Activated CD8-positive, alpha-beta T cell treated with anti-CD3 and anti-CD28 coated beads for 36 hours (primary cell): ENCODE measurements at regions of chr2 and their contacts with region 1.

Region 1: GRCh38 chr2:147800316-147800715 is 44.5 kb upstream of the ACVR2A start:
- DNase-seq: no peak
- ATAC-seq: no peak
- H3K4me3 Mint-ChIP-seq: no peak overlapping the region
- H3K27ac Mint-ChIP-seq: no peak overlapping the region
- H3K4me1 Mint-ChIP-seq: peaks cover 2% of the 10 kb centered on the region
- H3K27me3 Mint-ChIP-seq: peaks cover 2% of the 10 kb centered on the region
- CTCF ChIP-seq: no peak

Region 2: GRCh38 chr2:147663153-147663961 is 137.0 kb before region 1 on chr2:
- CTCF ChIA-PET with region 1: no interaction called
- POLR2A ChIA-PET with region 1: no interaction called
- intact Hi-C with region 1: loop called (anchors 5 kb)
- DNase-seq: peak; percentile 9
- ATAC-seq: peak; percentile 80
- H3K4me3 Mint-ChIP-seq: peak overlapping the region; percentile 28
- H3K27ac Mint-ChIP-seq: peak overlapping the region; percentile 49
- H3K4me1 Mint-ChIP-seq: peaks cover 15% of the 10 kb centered on the region
- H3K27me3 Mint-ChIP-seq: no peaks in the 10 kb centered on the region
- CTCF ChIP-seq: no peak

Region 3: DNA sequence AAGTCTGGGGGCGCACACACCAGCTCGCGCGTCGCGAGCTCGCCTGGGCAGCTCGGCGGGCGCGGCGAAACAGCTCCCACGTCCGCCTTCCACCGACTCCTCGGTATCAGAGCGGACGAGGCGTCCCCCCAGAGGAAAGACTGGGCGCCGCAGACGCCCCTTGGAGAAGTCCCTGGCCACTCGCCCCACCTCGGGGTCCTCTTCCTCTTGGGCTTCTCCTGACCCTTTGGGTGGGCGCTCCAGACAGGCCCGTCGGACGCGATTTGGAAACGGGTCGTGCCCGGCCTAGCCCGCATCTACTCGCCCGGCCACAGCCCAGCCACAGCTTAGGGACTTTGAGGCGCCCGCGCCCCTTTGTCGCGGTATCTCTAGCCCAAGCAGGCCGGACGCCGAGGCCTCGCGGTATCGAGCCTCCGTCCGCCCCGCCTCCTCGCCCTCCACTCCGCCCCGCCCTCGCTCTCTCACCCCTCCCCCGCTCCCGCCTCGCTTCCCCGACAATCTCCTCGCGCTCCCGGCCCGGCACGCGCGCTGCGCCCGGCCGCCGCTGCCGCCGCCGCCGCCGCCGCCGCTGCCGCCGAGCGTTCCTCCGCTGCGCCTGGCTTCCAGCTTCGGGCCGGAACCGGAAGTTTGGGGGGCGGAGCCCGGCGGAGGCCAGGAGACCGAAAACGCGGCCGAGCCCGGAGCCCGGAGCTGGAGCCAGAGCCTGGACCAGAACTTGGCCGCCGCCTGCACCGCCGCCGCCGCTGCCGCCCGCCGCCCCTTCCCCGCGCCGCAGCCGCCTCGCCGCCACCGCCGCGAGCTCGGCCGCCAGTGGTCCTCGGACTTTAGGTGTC is 43.8 kb after region 1 on chr2:
- CTCF ChIA-PET with region 1: no interaction called
- POLR2A ChIA-PET with region 1: no interaction called
- intact Hi-C with region 1: no loop called
- DNase-seq: peak; percentile 85
- ATAC-seq: peak; percentile 84
- H3K4me3 Mint-ChIP-seq: peak overlapping the region; percentile 91
- H3K27ac Mint-ChIP-seq: peak overlapping the region; percentile 80
- H3K4me1 Mint-ChIP-seq: peaks cover 27% of the 10 kb centered on the region
- H3K27me3 Mint-ChIP-seq: peaks cover 51% of the 10 kb centered on the region
- CTCF ChIP-seq: no peak